HepG2 (cell line): ENCODE measurements at regions of chr12 and their contacts with region 1.

Region 1: DNA sequence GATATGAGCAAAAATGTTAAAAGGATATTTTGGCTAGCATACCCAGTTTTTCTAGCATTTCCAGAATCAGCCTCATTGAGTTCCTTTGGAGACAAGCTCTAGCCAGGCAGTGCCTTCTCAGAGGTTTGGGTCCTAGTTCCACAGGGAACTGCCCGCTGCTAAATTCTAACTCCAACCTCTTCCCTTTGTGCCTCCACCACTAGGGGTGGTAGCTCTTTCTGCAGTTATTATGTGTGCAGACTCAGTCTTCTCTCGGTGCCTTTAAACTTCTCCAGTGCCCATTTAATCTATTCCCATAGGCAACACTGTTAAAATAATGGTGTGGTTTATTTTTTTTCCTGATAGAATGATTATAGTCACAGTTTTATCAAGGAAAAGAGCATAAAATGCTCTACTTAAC is 21.5 kb upstream of the SLC25A3 start:
- DNase-seq: peak; percentile 35
- ATAC-seq: peak; percentile 81
- H3K4me3 ChIP-seq: no peak overlapping the region
- H3K27ac ChIP-seq: no peak overlapping the region
- H3K4me1 ChIP-seq: peaks cover 25% of the 10 kb centered on the region
- H3K27me3 ChIP-seq: no peaks in the 10 kb centered on the region
- CTCF ChIP-seq: peak; percentile 42
- EP300 ChIP-seq: no peak
- POLR2A ChIP-seq: no peak
- RAD21 ChIP-seq: no peak

Region 2: DNA sequence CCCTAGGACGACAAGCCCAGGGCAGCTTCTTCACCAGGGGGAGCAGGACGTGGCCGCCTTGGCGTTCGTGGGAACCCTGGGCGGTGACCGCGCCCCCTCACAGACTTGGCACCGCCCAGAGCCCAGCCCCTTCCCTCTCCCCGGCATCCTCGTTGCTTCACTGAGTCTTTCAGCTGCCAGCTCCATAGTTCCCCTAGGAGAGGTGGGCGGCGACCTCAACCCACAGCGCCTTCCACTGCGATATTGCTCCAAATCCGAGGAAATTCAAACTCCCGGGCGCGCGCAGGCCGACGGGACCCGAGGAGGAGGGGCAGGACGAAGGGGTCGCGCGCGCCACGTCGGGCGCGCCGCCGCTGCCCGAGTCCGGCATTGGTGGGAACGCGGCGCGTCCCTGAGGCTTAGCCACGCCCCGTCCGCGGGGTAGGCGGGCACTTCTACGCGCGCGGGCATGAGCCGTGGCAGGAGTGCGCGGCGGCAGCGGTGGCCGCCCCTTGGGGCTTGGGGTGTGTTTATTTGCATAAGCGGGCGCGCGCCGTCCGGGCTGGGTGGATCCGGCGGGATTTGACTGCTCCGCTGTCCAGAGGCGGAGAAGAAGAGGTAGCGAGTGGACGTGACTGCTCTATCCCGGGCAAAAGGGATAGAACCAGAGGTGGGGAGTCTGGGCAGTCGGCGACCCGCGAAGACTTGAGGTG is 72.8 kb after region 1 on chr12 and contains the starts of genes APAF1 and IKBIP:
- CTCF ChIA-PET with region 1: no interaction called
- POLR2A ChIA-PET with region 1: interaction called, 3 read pairs
- in situ Hi-C with region 1: loop called (anchors 5 kb)
- intact Hi-C with region 1: loop called (anchors 2 kb)
- DNase-seq: peak; percentile 89
- ATAC-seq: peak; percentile 92
- H3K4me3 ChIP-seq: peak within 1 kb of the TSS; percentile 88 to 99 (median 95)
- H3K27ac ChIP-seq: peak within 1 kb of the TSS; percentile 84
- H3K4me1 ChIP-seq: peaks cover 40% of the 10 kb centered on the region
- H3K27me3 ChIP-seq: no peaks in the 10 kb centered on the region; a peak in 1 of 5 replicates
- CTCF ChIP-seq: peak; percentile 12; the same call in 1 of the 2 replicates
- EP300 ChIP-seq: no peak
- POLR2A ChIP-seq: peak; percentile 70 to 83; a peak in 3 of 4 replicates
- RAD21 ChIP-seq: no peak
- total RNA-seq, gene APAF1: 13.0 and 17.9 TPM in 2 replicates
- total RNA-seq, gene IKBIP: 50.4 and 55.5 TPM in 2 replicates

Region 3: DNA sequence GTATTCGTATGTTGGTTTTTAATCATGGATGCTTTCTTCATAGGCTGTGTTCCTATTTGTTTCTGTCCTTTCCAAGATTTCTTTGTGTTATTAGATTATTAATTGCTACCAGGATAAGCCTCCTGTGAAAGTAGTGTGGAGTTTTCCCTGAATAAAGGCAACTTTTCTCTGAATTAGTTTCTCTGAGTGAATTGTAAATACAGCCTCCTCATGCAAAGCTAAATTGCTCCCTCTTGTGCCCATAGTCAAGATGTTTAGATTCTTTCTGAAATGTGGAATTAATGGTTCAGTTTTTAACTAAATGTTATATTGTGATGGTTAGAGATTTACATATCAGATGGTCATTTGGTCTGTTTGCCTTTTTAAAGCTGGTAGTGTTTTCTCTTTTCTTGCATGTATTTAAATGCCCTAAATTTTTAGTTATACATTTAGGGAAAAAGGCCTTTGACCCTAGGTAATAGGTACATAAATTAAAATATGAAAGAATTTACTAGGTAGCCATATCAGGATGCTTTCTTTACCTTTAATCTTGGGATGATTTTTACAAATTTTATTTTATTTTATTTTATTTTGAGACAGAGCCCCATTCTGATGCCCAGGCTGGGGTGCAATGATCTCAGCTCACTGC is 82.0 kb after region 1 on chr12:
- CTCF ChIA-PET with region 1: interaction called, 24 read pairs
- POLR2A ChIA-PET with region 1: no interaction called
- in situ Hi-C with region 1: loop called (anchors 5 kb)
- intact Hi-C with region 1: loop called (anchors 1 kb)
- DNase-seq: peak; percentile 68
- ATAC-seq: peak; percentile 49; the same call in 2 of the 3 replicates
- H3K4me3 ChIP-seq: no peak overlapping the region
- H3K27ac ChIP-seq: no peak overlapping the region
- H3K4me1 ChIP-seq: no peaks in the 10 kb centered on the region
- H3K27me3 ChIP-seq: no peaks in the 10 kb centered on the region
- CTCF ChIP-seq: peak; percentile 65
- EP300 ChIP-seq: no peak
- POLR2A ChIP-seq: no peak
- RAD21 ChIP-seq: peak; percentile 68